ENCODE measurements at regions of chr19 and their contacts with region 1.

Region 1: GRCh38 chr19:18408053-18408476 is 10.6 kb upstream of the LRRC25 start:
- DNase-seq: peak; percentile 52
- H3K4me3 Mint-ChIP-seq: no peak overlapping the region
- H3K27ac Mint-ChIP-seq: no peak overlapping the region
- H3K4me1 Mint-ChIP-seq: peaks cover 6% of the 10 kb centered on the region
- H3K27me3 Mint-ChIP-seq: no peaks in the 10 kb centered on the region
- CTCF ChIP-seq: peak; percentile 32

Region 2: DNA sequence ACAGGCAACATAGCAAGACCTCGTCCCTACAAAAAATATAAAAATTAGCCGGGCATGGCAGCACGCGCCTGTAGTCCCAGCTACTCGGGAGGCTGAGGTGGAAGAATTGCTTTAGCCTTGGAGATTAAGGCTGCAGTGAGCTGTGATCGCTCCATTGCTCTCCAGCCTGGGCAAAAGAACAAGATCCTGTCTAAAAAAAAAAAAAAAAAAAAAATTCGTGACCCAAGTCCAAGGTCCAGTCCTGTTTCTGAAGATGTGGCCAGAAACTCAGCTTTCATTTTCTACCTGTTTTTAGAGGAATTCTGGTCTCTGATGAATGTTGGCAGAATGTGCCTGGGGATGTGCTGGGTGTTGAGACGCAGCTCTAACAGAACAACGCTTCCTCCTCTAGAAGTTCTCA is 69.5 kb before region 1 on chr19:
- CTCF ChIA-PET with region 1: no interaction called
- intact Hi-C with region 1: no loop called
- DNase-seq: no peak
- H3K4me3 Mint-ChIP-seq: no peak overlapping the region
- H3K27ac Mint-ChIP-seq: no peak overlapping the region
- H3K4me1 Mint-ChIP-seq: peaks cover 8% of the 10 kb centered on the region
- H3K27me3 Mint-ChIP-seq: no peaks in the 10 kb centered on the region
- CTCF ChIP-seq: no peak

Region 3: GRCh38 chr19:18349524-18350128 is 58.4 kb before region 1 on chr19:
- CTCF ChIA-PET with region 1: interaction called, 4 read pairs
- intact Hi-C with region 1: loop called (anchors 2 kb)
- DNase-seq: peak; percentile 70
- H3K4me3 Mint-ChIP-seq: no peak overlapping the region
- H3K27ac Mint-ChIP-seq: no peak overlapping the region
- H3K4me1 Mint-ChIP-seq: peaks cover 9% of the 10 kb centered on the region
- H3K27me3 Mint-ChIP-seq: no peaks in the 10 kb centered on the region
- CTCF ChIP-seq: peak; percentile 72